Activated T-helper 2 cell treated with anti-CD3 and anti-CD28 coated beads, Interferon-gamma antibody, Interleukin-2, Interleukin-4, amounts not matched to agents 10 μg/mL and 5 μg/mL and 100 μg/mL, durations not matched to agents 14 hours and 24 hours and 36 hours (primary cell): ENCODE measurements at regions of chr16 and their contacts with region 1.

Region 1: DNA sequence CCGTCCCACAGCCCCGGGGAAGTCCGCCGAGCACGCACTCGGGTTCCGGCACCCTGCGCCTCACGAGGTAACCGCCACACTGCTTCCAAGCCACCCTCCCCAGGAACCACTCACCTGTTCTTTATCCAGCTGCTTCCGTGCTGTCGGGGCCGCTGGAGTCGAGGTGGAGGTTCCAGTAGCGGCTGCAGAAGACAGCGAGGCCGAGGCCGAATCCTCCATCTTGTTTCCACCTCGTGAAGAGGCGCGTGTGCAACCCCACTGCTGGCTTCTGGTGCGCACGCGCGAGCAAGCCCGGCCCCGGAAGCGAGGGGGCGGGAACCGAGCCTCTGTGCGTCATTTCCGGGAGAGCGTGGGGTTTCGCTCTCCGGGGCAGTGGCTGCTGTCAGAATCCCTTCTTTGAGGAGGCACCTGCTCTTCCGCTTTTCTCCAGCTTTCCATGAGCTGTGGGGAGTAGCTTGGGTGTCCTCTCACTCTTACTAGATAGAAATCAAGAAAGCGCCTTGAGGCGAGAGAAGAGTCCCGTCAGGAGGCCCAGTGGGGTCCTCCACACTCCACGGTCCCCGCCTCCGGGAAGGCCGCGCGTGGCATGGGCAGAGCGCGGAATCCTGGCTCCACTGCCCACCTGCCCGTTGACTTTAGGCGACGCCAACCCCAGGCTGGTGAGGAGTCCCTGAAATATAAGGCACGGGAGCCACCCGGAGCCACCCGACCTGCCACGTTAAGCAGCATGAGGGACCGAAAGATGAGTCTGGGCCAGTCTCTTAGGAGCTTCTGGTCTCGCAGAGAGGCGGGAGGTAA is at the start of gene RSL1D1:
- DNase-seq: peak; percentile 95
- H3K4me3 Mint-ChIP-seq: peak within 1 kb of the TSS; percentile 98
- H3K27ac Mint-ChIP-seq: peak within 1 kb of the TSS; percentile 89
- H3K4me1 Mint-ChIP-seq: peaks cover 30% of the 10 kb centered on the region
- H3K27me3 Mint-ChIP-seq: no peaks in the 10 kb centered on the region
- total RNA-seq, gene RSL1D1: 326 and 348 TPM in 2 replicates

Region 2: GRCh38 chr16:11576427-11577289 is 274.8 kb before region 1 on chr16:
- intact Hi-C with region 1: no loop called
- DNase-seq: no peak
- H3K4me3 Mint-ChIP-seq: no peak overlapping the region
- H3K27ac Mint-ChIP-seq: no peak overlapping the region
- H3K4me1 Mint-ChIP-seq: peaks cover 45% of the 10 kb centered on the region
- H3K27me3 Mint-ChIP-seq: no peaks in the 10 kb centered on the region

Region 3: GRCh38 chr16:11667824-11668622 is 183.5 kb before region 1 on chr16 and contains the start of gene SNN:
- intact Hi-C with region 1: loop called (anchors 1 kb)
- DNase-seq: peak; percentile 82
- H3K4me3 Mint-ChIP-seq: peak within 1 kb of the TSS; percentile 72
- H3K27ac Mint-ChIP-seq: no peak within 1 kb of the TSS
- H3K4me1 Mint-ChIP-seq: peaks cover 58% of the 10 kb centered on the region
- H3K27me3 Mint-ChIP-seq: peaks cover 2% of the 10 kb centered on the region
- total RNA-seq, gene SNN: 8.6 and 9.5 TPM in 2 replicates

Region 4: DNA sequence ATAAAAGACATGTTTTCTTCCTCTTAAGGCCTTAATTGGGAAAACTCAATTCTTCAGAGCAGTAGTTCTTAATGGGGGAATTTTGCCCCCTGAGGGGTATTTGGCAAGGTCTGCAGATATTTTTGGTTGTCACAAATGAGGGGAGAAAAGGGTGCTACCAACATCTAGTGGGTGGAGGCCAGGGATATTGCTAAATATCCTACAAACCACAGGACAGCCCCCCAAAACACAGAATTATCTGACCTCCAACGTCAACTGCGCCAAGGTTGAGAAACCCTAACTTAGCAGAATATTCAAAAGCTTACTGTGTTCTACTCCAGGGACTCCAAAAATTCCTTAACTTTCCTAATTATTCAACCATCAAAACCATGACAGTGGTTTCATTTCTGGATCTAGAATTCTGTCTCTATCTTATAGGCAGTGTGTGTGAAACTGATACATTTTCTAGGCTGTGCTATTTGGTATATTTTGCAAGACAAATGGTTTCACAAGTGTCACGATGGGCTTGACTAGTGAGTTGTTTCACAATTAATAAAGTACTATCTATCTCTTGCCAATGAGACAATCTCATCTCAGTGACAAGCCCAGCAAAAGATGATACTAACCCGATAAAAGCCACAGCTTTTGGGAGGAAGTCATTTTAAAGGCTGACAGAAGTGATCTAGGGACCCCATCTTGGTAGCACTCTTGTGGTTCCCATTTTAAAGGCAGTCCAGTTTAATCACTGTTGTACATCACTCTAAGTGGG is 123.5 kb before region 1 on chr16:
- intact Hi-C with region 1: loop called (anchors 5 kb)
- DNase-seq: no peak
- H3K4me3 Mint-ChIP-seq: no peak overlapping the region
- H3K27ac Mint-ChIP-seq: peak overlapping the region; percentile 80
- H3K4me1 Mint-ChIP-seq: peaks cover 51% of the 10 kb centered on the region
- H3K27me3 Mint-ChIP-seq: no peaks in the 10 kb centered on the region

Region 5: DNA sequence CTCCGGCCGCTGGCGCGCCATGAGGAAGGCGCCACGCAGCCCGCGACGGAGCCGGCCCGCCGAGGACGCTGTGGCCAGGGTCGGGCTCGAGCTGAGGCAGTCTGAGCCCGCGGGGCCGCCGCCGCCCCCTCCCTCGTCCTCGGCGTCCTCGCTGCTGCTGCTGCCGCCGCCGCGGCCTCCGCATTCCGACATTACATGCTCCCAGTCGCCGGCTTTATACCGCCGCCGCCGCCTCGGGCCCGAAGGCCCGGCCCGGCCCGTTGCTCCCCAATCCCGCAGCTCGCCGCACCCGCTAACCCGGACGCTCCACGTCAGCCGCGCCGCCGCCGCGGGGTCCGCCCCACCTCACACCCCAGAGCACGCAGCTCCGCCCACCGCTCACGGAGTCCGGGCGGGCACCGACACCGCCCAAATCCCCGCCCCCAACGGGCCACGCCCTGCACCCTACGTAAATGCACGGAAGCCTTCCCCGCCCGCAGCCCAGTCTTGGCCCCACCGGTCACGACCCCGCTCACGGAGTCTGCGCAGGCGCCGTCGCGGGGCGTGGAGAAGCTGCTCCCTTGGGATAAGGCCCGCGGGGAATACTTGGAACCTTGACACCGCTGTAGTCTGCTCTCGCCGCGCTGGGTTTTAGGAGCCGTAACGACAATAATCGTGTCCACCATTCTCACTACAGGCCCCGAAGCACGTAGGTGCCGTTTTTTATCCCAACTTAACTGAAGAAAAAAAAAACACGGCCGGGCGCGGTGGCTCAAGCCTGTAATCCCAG is 108.8 kb before region 1 on chr16 and contains the start of gene TXNDC11:
- intact Hi-C with region 1: loop called (anchors 5 kb)
- DNase-seq: peak; percentile 99
- H3K4me3 Mint-ChIP-seq: peak within 1 kb of the TSS; percentile 93
- H3K27ac Mint-ChIP-seq: peak within 1 kb of the TSS; percentile 91
- H3K4me1 Mint-ChIP-seq: peaks cover 50% of the 10 kb centered on the region
- H3K27me3 Mint-ChIP-seq: no peaks in the 10 kb centered on the region
- total RNA-seq, gene TXNDC11: 48.0 and 53.0 TPM in 2 replicates

Region 6: GRCh38 chr16:11797166-11797956 is 54.1 kb before region 1 on chr16 and contains the start of gene ZC3H7A:
- intact Hi-C with region 1: loop called (anchors 1 kb)
- DNase-seq: peak; percentile 94
- H3K4me3 Mint-ChIP-seq: peak within 1 kb of the TSS; percentile 93
- H3K27ac Mint-ChIP-seq: peak within 1 kb of the TSS; percentile 96
- H3K4me1 Mint-ChIP-seq: peaks cover 67% of the 10 kb centered on the region
- H3K27me3 Mint-ChIP-seq: no peaks in the 10 kb centered on the region
- total RNA-seq, gene ZC3H7A: 63.4 and 71.1 TPM in 2 replicates

Region 7: GRCh38 chr16:11871193-11871592 is 19.7 kb after region 1 on chr16:
- intact Hi-C with region 1: no loop called
- DNase-seq: no peak
- H3K4me3 Mint-ChIP-seq: no peak overlapping the region
- H3K27ac Mint-ChIP-seq: no peak overlapping the region
- H3K4me1 Mint-ChIP-seq: peaks cover 1% of the 10 kb centered on the region
- H3K27me3 Mint-ChIP-seq: no peaks in the 10 kb centered on the region